HEK293T (cell line): ENCODE measurements at regions of chr12 and their contacts with region 1.

Region 1: DNA sequence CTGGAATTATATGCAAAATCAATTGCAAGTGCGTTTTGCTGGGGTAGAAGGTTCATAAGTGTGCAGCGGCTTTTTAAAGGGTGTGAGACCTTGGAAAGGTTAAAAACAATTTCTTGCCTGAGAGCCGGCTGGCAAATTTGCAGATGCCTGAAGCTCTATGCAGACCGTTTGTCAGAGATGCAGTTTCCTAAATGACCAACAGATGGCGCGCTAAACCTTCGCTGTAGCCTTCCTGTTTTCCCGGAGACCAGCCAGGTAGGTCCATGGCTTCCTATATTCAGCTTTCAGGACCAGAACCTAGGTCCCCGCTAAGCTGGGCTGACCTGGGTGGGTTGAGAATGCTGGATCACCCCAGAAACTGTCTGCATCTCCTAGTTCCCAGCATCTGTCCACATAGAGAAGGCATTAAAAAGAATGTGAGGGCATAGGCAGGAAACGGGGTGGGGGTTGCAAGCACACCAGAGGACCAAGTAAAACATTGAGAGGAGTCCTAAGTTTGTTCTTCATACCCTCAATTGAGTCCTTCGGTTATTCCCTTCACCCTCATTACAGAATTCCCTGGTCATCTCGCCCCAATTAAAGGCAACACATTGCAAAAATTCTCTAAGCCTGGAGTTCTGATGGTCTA is 5.7 kb upstream of the NOS1 start:
- DNase-seq: peak; percentile 81

Region 2: DNA sequence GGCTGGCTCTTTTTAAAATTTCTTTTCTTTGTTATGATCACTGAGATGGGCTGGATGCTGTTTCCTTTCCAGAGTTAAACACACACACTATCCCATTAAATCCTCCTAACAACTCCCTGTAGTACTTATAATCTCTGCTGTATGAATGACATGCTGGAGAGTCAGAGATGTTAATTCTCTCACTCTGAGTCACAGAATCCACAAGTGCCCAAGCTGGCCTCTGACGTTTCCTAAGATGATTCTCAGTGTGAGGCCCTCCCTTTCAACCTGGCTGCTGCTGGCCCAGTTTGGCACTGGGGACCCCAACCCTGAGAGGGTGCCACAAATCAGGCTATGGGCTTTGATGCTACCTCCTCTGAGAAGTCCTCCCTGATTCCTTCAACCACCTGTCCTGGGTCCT is 11.1 kb before region 1 on chr12:
- CTCF ChIA-PET with region 1: no interaction called
- POLR2A ChIA-PET with region 1: no interaction called
- DNase-seq: no peak

Region 3: DNA sequence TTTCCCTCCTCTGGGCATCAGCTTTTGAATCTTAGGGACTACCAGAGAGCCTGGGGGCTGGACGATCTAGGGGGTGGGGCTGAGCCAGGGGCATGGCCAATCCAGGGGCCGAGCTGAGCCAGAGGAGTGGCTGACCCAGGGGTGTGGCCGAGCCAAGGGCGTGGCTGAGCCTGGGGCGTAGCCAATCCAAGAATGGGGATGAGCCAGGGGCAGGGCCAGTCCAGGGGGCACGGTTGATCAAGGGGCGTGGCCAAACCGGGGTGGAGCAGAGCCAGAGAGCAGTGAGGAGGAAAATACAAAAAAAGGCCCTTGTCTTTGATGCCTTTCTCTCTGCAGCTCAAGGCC is 213.6 kb after region 1 on chr12:
- CTCF ChIA-PET with region 1: interaction called, 10 read pairs
- POLR2A ChIA-PET with region 1: no interaction called
- DNase-seq: peak; percentile 78

Region 4: DNA sequence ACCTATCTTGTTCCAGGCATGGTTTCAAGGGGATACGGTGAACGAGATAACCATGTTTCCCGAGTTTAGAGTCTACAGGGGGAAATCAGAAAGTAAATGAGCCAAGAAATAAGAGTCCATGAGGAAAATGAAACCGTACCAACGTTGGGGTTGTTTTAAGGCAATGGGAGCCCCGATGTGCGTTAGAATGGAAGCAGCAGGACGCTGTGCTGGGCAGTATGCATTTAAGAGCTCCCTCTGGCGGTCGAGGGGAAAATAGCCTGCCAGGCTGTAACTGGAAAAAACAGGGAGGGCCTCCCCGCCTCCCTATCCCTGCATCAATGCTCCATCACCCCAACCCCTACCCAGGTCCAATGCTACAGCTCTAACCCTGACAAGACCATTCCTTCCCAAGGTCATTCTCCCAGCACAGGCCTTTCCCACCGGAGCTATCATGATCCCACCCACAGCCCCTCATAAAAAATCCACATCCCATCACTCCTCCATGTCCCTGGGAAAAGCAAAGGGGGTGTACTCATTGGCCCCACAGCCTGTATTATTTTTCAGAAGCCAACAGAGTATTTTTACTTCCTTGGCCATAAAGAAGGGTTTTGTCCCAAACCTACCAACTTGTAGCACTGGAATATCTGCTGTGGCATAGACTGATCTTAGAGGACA is 220.6 kb after region 1 on chr12:
- CTCF ChIA-PET with region 1: interaction called, 32 read pairs
- POLR2A ChIA-PET with region 1: no interaction called
- DNase-seq: peak; percentile 76

Region 5: GRCh38 chr12:117836999-117837736 is 470.0 kb after region 1 on chr12:
- CTCF ChIA-PET with region 1: interaction called, 17 read pairs
- POLR2A ChIA-PET with region 1: no interaction called
- DNase-seq: peak; percentile 78